H1 (cell line): ENCODE measurements at regions of chr7 and their contacts with region 1.

Region 1: GRCh38 chr7:24896031-24896501 is 83.9 kb downstream of the OSBPL3 start:
- DNase-seq: no peak
- H3K4me3 ChIP-seq: no peak overlapping the region
- H3K27ac ChIP-seq: no peak overlapping the region
- H3K4me1 ChIP-seq: peaks cover 0 to 10% (median 1%) of the 10 kb centered on the region in 4 experiments; a peak in 2 of 7 replicates
- H3K27me3 ChIP-seq: no peaks in the 10 kb centered on the region
- CTCF ChIP-seq: no peak
- EP300 ChIP-seq: no peak
- POLR2A ChIP-seq: no peak
- RAD21 ChIP-seq: no peak

Region 2: DNA sequence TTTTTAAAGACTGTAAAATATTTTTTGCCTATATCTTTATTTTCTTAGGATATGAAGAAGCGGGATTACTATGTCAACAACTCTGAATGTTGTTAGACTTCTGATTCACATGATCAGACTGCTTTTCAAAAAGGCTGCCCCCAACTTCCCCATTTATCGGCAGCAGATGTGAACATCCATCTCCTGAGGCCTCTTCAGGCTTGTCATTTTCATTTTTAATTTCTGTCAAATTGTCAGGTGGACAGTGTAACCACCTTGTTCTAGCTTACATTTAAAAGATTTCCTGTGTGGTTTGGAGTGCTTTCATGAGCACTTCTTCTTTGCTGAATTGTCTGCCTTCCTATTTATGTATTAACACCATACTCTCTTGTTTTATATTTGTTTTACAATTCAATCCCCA is 60.0 kb before region 1 on chr7:
- CTCF ChIA-PET with region 1: no interaction called
- POLR2A ChIA-PET with region 1: no interaction called
- DNase-seq: no peak
- H3K4me3 ChIP-seq: no peak overlapping the region
- H3K27ac ChIP-seq: no peak overlapping the region
- H3K4me1 ChIP-seq: no peaks in the 10 kb centered on the region
- H3K27me3 ChIP-seq: no peaks in the 10 kb centered on the region
- CTCF ChIP-seq: no peak
- EP300 ChIP-seq: no peak
- POLR2A ChIP-seq: no peak
- RAD21 ChIP-seq: no peak

Region 3: GRCh38 chr7:24877790-24878311 is 18.2 kb before region 1 on chr7:
- CTCF ChIA-PET with region 1: interaction called, 25 read pairs
- POLR2A ChIA-PET with region 1: interaction called, 6 read pairs
- DNase-seq: no peak
- H3K4me3 ChIP-seq: peak overlapping the region in 1 of 4 experiments; percentile 25; a peak in 1 of 8 replicates
- H3K27ac ChIP-seq: no peak overlapping the region
- H3K4me1 ChIP-seq: peaks cover 3 to 21% (median 12%) of the 10 kb centered on the region in 4 experiments; a peak in 5 of 7 replicates
- H3K27me3 ChIP-seq: no peaks in the 10 kb centered on the region
- CTCF ChIP-seq: no peak
- EP300 ChIP-seq: no peak
- POLR2A ChIP-seq: no peak
- RAD21 ChIP-seq: no peak

Region 4: DNA sequence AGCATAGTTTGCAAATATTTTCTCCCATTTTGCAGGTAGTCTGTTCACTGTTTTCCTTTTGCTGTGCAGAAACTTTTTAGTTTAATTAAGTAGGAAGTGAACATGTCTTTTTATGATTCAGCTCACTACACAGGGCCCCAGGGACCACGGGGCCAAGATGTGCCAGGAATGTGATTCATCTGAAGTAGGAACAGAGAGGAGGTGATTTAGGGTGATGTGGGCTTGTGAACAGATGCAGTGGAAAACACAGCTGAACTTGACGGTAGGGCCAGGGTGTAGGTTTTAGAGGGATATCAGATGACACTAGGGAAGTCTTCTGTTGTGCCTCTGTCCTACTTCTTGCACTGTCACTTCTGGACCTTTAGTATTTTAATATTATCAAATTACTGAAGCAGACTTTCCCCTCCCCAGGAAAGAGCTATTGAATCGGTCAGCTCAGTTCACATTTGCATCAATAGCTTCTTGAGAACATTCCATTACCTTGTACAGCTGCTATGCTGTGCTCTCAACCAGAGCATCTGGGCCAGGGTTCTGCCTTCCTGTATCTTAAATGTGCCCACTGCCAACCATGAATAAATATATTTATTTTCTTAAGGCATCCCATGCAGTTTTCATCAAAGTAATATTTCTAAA is 13.0 kb before region 1 on chr7:
- CTCF ChIA-PET with region 1: interaction called, 25 read pairs
- POLR2A ChIA-PET with region 1: interaction called, 6 read pairs
- DNase-seq: no peak
- H3K4me3 ChIP-seq: no peak overlapping the region
- H3K27ac ChIP-seq: no peak overlapping the region
- H3K4me1 ChIP-seq: peaks cover 3 to 17% (median 10%) of the 10 kb centered on the region in 4 experiments; a peak in 5 of 7 replicates
- H3K27me3 ChIP-seq: no peaks in the 10 kb centered on the region
- CTCF ChIP-seq: no peak
- EP300 ChIP-seq: no peak
- POLR2A ChIP-seq: no peak
- RAD21 ChIP-seq: no peak

Region 5: DNA sequence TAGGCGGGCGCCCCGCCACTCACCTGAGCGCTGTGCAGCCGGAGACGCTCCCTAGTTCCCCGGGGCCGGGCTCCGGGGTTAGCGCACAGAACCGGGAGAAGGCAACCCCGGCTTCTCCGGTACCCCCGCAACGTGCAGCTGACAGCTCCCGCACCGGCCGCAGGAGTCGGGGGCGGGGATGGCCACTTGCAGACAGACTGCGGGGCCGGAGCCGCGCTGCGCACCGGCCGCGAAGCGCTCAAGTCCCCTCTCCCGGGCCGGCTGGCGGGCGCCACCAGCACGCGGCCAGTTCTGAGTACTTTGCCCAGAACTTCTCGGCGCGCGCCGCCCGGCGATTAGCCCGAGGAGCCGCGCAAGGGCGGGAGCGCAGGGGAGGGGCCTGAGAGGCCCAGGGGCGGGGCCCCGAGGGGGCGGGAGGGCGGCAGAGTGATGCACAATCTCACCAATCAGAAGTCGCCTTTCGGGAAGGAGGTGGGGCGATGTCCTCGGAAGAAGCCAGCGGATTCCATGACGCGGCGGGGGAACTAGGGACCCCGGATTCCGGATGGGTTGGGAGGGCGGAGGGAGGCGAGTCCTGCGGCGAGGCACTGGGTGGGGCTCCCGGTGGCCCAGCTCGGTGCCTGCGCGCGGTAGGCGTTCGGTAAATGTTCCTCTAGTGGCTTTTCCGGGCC is 83.9 kb after region 1 on chr7 and contains the start of gene OSBPL3:
- CTCF ChIA-PET with region 1: interaction called, 26 read pairs
- POLR2A ChIA-PET with region 1: interaction called, 3 read pairs
- DNase-seq: peak; percentile 90 to 98
- H3K4me3 ChIP-seq: peak within 1 kb of the TSS; percentile 47 to 79 (median 76)
- H3K27ac ChIP-seq: no peak within 1 kb of the TSS
- H3K4me1 ChIP-seq: peaks cover 6 to 14% (median 10%) of the 10 kb centered on the region in 4 experiments
- H3K27me3 ChIP-seq: peaks cover 8 to 36% (median 28%) of the 10 kb centered on the region in 4 experiments
- CTCF ChIP-seq: peak in 1 of 3 experiments; percentile 11; a peak in 1 of 4 replicates
- EP300 ChIP-seq: no peak
- POLR2A ChIP-seq: peak in 1 of 2 experiments; percentile 51; a peak in 2 of 3 replicates
- RAD21 ChIP-seq: 0 out of 4 replicates have a peak, but pooled peaks of 1 of the 2 experiments have one; percentile 1
- total RNA-seq, gene OSBPL3: 9.4 and 13.9 TPM in 2 replicates